ENCODE measurements at regions of chr17 and their contacts with region 1.

Region 1: DNA sequence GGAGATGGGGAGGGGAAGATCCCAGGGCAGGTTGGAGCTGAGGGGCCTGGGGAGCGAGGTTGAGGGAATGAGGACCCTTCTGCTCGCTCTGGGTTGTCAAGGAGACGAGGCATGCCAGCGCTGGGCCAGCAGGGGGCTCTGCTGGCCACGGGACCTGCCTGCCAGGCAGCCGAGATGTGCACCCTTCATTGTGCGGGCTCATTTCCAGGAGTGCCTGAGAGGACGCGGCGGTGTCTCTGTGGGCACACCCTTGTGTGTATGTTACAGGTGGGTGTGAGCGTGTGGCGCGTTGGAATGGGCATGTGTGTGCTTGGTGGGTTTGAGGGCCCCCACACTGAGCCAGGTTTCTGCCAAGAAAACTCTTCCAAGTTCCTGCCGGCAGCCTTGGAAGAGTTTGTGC is 15.9 kb downstream of the ARHGAP23 start:
- DNase-seq: no peak
- H3K4me3 ChIP-seq: no peak overlapping the region
- H3K27me3 ChIP-seq: no peaks in the 10 kb centered on the region
- CTCF ChIP-seq: peak; percentile 98

Region 2: DNA sequence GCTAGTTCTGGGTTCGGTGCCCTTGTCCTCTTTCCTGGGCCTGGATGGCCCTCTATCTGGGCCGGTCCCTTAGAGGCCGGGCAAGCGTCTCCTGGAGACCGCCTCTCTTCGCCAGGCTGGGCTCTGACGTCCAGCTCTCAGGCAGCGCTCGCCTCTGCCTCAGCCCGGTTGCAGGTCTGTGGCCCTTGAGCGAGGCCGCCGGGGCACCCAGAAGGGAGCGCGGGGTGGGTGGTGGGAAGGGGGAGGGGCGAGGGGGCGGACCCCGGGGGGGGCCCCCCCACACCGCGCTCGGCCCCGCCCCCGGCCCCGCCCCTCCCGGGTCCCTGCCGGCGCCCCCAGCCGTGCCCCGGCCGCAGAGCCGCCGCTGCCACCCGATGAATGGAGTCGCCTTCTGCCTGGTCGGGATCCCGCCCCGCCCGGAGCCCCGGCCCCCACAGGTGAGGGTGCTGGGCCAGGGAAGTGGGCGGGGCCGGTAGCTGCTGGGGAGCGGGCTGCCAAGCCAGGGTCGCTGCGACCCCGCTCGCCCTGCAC is 16.0 kb before region 1 on chr17 and contains the start of gene ARHGAP23:
- CTCF ChIA-PET with region 1: interaction called, 19 read pairs
- POLR2A ChIA-PET with region 1: no interaction called
- DNase-seq: no peak
- H3K4me3 ChIP-seq: peak within 1 kb of the TSS; percentile 84
- H3K27me3 ChIP-seq: no peaks in the 10 kb centered on the region
- CTCF ChIP-seq: no peak
- polyA plus RNA-seq, gene ARHGAP23: 15.7 and 17.2 TPM in 2 replicates

Region 3: DNA sequence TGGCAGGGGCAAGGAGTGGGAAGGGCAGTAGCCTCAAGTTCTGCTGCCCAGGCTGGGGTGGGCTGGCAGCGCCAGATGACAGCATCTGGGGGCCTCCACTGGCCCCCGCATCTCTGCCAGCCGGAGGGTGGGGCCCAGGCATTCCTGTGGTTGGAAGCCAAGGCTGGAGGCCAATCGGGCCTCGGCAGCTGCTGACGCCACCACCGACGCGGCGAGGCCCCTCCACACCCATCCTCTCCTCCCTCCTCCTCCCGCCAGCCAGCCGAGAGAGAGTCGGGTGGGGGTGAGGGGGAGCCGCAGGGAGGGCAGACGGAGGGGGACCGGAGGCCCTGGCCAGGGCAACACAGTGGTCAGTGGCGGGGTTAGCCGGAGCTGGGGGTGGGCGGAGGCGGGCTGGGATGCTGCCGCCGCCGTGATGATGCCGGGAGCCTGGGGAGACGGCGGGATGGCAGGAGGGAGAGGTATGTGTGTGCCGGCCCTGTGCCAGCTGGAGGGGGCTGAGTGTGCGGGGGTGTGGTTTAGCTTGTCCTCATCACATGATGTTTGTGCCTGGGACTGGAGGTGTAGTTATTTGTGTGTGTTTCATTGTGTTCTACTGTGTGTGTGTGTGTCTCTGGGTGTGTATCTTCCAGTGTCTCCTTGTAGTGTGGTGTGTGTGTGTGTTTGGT is 20.7 kb after region 1 on chr17:
- CTCF ChIA-PET with region 1: interaction called, 10 read pairs
- POLR2A ChIA-PET with region 1: no interaction called
- DNase-seq: peak; percentile 77
- H3K4me3 ChIP-seq: peak overlapping the region; percentile 45
- H3K27me3 ChIP-seq: no peaks in the 10 kb centered on the region
- CTCF ChIP-seq: no peak

Region 4: DNA sequence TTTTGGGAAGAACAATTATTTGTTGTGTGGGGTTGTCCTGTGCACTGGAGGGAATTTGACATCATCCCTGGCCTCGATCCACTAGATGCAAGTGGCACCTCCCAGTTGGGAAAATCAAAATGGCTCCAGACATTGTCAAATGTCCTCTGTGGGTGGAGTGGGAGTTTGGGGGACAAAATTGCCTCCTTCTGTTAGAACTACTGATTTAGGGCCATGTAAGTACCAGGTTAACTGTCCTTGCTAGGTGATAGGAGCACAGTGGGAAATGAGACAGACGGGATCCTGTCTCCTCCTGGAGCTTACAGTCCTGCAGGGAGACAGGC is 41.0 kb after region 1 on chr17:
- CTCF ChIA-PET with region 1: interaction called, 11 read pairs
- POLR2A ChIA-PET with region 1: no interaction called
- DNase-seq: no peak
- H3K4me3 ChIP-seq: no peak overlapping the region
- H3K27me3 ChIP-seq: no peaks in the 10 kb centered on the region
- CTCF ChIP-seq: no peak

Region 5: GRCh38 chr17:38509008-38509771 is 65.0 kb after region 1 on chr17:
- CTCF ChIA-PET with region 1: interaction called, 3 read pairs
- POLR2A ChIA-PET with region 1: interaction called, 10 read pairs
- DNase-seq: peak; percentile 56
- H3K4me3 ChIP-seq: no peak overlapping the region
- H3K27me3 ChIP-seq: no peaks in the 10 kb centered on the region
- CTCF ChIP-seq: peak; percentile 90

Region 6: GRCh38 chr17:38550661-38551060 is 106.5 kb after region 1 on chr17:
- CTCF ChIA-PET with region 1: no interaction called
- POLR2A ChIA-PET with region 1: no interaction called
- DNase-seq: no peak
- H3K4me3 ChIP-seq: no peak overlapping the region
- H3K27me3 ChIP-seq: peaks cover 3% of the 10 kb centered on the region
- CTCF ChIP-seq: no peak